Activated T-helper 2 cell treated with anti-CD3 and anti-CD28 coated beads, Interferon-gamma antibody, Interleukin-2, Interleukin-4, amounts not matched to agents 10 μg/mL and 5 μg/mL and 100 μg/mL, durations not matched to agents 14 hours and 24 hours and 36 hours (primary cell): ENCODE measurements at regions of chr7 and their contacts with region 1.

Region 1: GRCh38 chr7:92833024-92833765 is 3.2 kb downstream of the CDK6 start:
- DNase-seq: peak; percentile 87
- H3K4me3 Mint-ChIP-seq: peak overlapping the region; percentile 94
- H3K27ac Mint-ChIP-seq: peak overlapping the region; percentile 98
- H3K4me1 Mint-ChIP-seq: peaks cover 40% of the 10 kb centered on the region
- H3K27me3 Mint-ChIP-seq: no peaks in the 10 kb centered on the region

Region 2: DNA sequence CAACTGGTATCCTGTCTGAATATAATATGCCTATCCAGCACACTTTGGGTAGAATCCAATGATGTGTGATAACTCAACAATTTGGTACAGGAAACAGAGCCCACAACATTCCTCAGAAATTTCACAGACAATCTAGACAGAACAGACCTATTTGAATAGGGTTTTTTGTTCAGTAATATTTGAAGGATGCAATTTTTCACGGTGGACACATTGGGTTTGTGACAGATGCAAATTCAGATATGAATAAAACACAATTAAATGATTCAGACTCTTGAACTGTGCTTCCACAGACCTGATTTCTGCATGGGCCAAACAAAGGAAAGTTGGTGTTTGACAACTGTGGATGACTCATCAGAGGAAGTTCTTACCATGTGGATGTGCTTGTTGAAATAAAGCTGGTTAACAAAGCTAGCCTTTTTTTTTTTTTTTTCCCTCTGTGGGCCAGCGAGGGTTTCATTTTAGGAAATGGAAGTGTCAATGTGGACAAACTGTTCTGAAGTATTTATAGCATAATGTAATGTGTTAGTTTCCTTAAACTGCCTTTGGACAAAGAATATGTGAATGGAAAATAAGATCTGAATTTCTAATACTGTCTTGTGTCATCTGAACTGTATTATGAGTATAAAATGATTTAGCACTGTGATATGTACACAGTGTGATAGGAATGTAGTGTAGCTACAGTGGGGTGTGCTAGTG is 199.8 kb before region 1 on chr7:
- intact Hi-C with region 1: loop called (anchors 1 kb)
- DNase-seq: no peak
- H3K4me3 Mint-ChIP-seq: peak overlapping the region; percentile 43
- H3K27ac Mint-ChIP-seq: peak overlapping the region; percentile 96
- H3K4me1 Mint-ChIP-seq: peaks cover 70% of the 10 kb centered on the region
- H3K27me3 Mint-ChIP-seq: no peaks in the 10 kb centered on the region

Region 3: DNA sequence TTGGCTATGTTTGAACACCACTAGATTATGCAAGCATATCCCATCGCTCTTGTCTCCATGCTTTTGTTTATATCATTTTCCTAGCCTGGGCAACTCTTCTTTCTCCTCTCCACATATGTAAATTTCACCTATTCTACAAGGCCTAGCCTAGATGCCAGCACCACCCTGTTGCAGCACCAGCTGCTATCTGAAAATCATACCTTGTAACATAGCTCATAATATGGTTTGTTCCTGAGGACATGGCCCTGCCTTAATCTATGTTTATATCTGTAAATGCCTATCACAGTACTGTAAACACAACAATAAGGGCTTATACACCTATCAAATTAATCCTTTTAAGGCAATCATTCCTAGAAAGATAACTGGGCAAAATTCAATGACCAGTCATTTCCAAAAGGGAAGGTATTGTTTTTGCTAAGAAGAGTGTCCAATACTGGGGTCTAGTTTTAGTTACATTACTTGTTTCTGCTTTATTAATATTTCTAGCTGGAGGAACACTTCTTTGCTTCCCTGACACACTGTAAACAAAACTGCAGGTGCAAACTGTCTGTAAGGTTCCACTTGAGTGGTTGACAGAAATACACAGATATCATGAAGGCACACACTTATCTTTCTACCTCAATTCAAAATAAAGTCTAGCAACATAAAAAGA is 158.9 kb before region 1 on chr7:
- intact Hi-C with region 1: no loop called
- DNase-seq: no peak
- H3K4me3 Mint-ChIP-seq: no peak overlapping the region
- H3K27ac Mint-ChIP-seq: peak overlapping the region; percentile 67
- H3K4me1 Mint-ChIP-seq: peaks cover 57% of the 10 kb centered on the region
- H3K27me3 Mint-ChIP-seq: no peaks in the 10 kb centered on the region

Region 4: DNA sequence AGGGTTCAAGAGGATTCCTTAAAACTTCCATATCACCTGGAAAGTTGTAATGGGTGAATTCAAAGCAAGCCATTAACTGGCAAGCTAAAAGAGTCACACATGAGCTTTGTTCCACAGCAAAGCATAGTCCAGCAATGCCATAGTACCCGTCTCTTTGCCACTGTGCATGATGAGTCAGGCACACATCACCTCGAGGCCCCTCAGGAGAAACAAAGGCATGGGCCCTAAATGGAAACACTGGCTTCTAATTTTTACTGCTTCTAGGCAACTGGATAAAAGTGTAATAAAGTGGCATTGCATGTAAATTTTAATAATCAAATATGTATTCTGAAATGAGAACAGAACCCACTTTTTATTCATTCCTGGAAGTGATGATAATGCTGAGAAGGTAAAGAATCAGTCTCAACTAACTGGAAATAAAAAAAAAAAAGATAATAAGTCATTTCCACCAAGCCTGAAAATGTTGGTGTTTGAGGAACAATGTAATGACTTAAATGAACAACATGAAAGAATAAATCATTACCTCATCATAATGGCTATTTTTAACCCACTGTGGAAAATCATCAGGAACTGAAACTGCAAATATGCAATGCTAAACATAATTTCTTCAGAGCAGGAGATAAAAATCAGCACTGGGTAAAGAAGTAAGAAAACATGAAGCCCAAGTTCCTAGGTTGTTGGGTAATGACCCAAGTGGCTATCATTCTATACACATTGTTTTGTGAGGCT is 101.7 kb before region 1 on chr7:
- intact Hi-C with region 1: loop called (anchors 1 kb)
- DNase-seq: no peak
- H3K4me3 Mint-ChIP-seq: peak overlapping the region; percentile 34
- H3K27ac Mint-ChIP-seq: peak overlapping the region; percentile 96
- H3K4me1 Mint-ChIP-seq: peaks cover 74% of the 10 kb centered on the region
- H3K27me3 Mint-ChIP-seq: no peaks in the 10 kb centered on the region

Region 5: DNA sequence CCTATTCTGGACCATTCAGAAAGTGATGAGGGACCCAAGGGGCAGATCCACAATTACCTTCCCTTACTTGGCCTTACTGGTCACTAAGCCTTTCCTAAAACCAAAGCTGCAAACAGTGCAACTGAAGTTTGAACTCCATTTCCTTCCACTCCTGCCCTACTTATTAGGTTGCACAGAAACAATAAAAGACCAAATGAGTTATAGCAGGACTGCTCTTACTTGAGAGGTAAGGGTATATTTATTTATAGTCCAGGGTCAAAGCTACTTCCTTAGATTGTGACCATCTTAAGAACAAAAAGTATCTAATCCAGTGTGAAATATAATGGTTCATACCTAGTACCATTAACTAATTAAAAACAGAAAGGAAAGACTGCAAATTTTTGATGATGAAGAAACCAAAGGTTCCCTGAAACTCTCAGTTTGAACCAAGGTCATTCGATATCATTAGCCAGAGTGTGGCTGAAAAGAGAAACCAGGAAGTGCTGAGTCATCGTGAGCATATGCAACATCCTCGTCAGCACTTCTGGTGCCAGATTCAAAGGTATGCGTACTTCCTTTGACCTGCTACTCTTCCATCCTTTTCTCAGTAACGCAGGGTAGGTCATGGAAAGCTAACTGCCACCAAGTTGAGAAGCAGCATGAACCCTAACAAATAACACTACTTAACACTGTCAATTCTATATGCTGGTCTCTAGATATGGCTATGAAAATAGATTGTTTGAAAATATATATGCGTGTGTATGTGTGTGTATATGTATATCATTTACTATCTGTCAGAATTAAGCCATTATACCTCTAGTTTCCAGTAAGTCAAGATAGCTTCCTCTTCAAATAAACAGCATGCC is 23.6 kb before region 1 on chr7:
- intact Hi-C with region 1: loop called (anchors 1 kb)
- DNase-seq: peak; percentile 71
- H3K4me3 Mint-ChIP-seq: peak overlapping the region; percentile 61
- H3K27ac Mint-ChIP-seq: peak overlapping the region; percentile 91
- H3K4me1 Mint-ChIP-seq: peaks cover 71% of the 10 kb centered on the region
- H3K27me3 Mint-ChIP-seq: no peaks in the 10 kb centered on the region

Region 6: DNA sequence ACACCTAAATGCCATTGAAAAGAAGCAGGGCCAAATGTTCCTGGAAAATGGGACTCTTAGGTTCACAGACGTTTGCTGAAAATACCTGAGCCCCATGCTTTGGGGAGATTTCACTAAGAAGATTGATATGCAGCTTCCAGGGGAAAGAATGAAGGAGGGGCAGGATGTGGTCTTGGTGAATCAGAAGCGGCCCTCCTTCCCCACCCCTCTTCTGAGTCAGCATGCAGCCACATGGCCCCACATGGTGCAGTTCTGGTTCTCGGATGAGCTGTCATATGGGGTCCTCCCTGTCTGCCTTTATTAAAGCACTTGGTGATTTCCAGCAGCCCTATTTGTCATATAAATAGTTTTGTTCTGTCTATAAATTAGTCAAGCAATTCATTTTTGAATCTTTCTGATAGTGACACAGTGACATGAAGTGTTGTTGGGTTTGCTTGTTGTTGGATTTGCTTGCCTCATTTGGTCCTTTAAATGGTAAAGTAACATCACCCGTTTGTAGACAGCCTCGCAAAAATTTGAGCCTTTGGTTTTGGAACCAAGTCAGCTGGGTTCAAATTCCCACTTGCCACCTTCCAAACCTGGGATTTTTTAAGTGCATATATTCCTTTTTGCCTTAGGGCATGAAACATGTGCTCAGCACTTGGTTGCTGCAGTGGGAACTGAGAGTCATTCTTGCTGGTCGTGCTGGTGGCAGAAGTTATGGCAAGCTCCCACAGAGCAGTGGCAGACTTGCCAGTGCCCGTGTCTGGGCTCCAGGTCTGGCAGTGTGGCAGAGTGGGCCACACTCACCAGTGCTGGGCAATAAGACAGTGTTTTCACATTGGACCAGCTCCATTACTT is 71.3 kb after region 1 on chr7:
- intact Hi-C with region 1: loop called (anchors 1 kb)
- DNase-seq: peak; percentile 81
- H3K4me3 Mint-ChIP-seq: peak overlapping the region; percentile 20
- H3K27ac Mint-ChIP-seq: peak overlapping the region; percentile 92
- H3K4me1 Mint-ChIP-seq: peaks cover 21% of the 10 kb centered on the region
- H3K27me3 Mint-ChIP-seq: no peaks in the 10 kb centered on the region

Region 7: DNA sequence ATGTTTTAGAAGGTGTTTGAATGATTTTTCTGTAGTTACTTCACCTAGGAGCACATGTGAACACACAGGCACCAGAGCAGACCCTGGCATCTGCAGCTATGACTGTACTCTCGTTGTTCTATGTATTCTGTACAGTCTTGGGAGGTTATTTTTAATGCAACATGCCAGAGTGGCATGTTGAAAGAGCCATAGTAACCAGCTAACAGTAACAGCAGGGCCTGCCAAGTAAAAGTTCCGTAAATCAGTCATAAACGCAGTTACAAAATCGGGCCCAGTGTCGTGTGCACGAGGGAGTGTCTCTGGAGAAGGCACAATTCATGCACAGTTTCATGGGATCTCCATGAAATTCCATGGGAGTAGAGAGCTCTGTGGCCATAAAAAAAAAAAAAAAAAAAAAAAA is 111.4 kb after region 1 on chr7:
- intact Hi-C with region 1: no loop called
- DNase-seq: no peak
- H3K4me3 Mint-ChIP-seq: no peak overlapping the region
- H3K27ac Mint-ChIP-seq: no peak overlapping the region
- H3K4me1 Mint-ChIP-seq: peaks cover 4% of the 10 kb centered on the region
- H3K27me3 Mint-ChIP-seq: no peaks in the 10 kb centered on the region

Region 8: DNA sequence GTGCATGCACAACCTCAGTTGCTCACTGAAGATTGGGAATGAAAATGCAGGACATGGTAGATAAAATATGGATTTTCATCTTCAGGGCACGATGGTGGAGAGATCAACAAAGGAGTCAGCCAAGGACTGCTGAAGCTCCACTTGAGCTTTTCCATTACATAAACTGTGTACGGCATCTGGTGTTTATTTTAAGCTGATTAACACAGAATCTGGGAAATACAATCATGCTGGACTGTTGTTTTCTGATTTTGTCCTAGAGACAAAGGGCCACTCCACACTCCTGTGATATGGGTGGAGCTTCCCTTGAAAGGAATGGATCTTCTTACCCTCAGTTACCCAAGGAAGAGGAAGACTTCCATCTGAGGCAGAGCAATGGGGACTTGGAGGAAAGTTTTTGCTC is 164.0 kb after region 1 on chr7:
- intact Hi-C with region 1: no loop called
- DNase-seq: no peak
- H3K4me3 Mint-ChIP-seq: no peak overlapping the region
- H3K27ac Mint-ChIP-seq: no peak overlapping the region
- H3K4me1 Mint-ChIP-seq: no peaks in the 10 kb centered on the region
- H3K27me3 Mint-ChIP-seq: peaks cover 10% of the 10 kb centered on the region

Region 9: DNA sequence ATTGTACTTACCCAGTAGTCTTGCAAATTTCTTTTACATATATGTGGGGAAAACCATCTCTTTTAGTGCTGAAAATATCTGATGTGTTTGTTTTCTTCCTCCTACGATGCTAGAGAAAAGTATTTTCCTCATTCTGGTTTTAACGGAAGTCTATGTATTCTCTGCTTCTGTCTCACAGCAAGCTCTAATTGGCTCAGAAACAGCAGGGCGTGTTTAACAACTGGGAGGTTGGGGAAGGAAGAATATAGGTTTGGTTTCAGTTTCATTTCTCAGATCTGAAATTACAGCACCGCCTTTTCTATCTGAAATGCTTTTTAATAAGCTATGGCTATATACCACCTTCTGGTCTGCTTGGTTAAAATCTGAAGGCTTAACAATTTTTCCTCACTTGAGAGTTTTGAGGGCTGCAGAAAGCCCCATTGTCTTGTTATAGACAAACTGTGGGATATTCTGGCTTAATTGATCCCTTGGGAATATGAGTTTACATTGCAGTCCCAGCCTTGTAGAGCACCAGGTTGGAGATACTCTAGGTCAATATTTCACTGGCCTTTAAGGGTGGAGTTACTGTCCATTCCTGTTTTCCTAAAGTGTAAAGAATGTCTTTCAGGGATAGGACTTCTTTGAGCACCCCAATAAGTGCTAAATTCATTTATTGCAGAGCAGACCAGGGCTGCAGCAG is 284.8 kb after region 1 on chr7 and contains the start of gene SAMD9:
- intact Hi-C with region 1: loop called (anchors 5 kb)
- DNase-seq: peak; percentile 58
- H3K4me3 Mint-ChIP-seq: peak within 1 kb of the TSS; percentile 85
- H3K27ac Mint-ChIP-seq: peak within 1 kb of the TSS; percentile 90
- H3K4me1 Mint-ChIP-seq: peaks cover 38% of the 10 kb centered on the region
- H3K27me3 Mint-ChIP-seq: no peaks in the 10 kb centered on the region
- total RNA-seq, gene SAMD9: 9.3 and 9.4 TPM in 2 replicates